AG04449 (cell line): ENCODE measurements at regions of chr1 and their contacts with region 1.

Region 1: GRCh38 chr1:200890818-200891773 is 3.6 kb upstream of the INAVA start:
- DNase-seq: no peak
- H3K4me3 ChIP-seq: peak overlapping the region; percentile 55
- CTCF ChIP-seq: peak; percentile 66

Region 2: GRCh38 chr1:200526709-200527612 is 364.1 kb before region 1 on chr1:
- CTCF ChIA-PET with region 1: no interaction called
- POLR2A ChIA-PET with region 1: no interaction called
- DNase-seq: no peak
- H3K4me3 ChIP-seq: no peak overlapping the region
- CTCF ChIP-seq: no peak

Region 3: DNA sequence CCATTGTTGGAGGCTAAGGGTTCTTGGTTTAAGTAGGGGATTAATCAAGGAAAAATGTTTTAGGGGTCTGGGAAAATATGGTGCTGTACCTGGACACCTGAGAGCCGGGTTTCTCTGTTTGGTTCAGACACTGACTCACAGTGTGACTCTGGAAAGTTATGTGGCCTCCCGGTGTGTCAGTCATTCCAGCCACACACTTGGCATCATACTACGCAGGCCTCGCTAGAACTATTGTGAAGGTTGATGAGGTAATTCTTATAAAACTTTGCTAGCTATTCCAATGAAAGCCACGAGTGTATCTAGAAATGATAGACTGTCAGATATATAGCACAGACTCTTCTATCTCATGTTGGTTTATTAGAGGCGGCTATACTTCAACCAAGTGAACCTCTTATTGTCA is 157.2 kb before region 1 on chr1:
- CTCF ChIA-PET with region 1: no interaction called
- POLR2A ChIA-PET with region 1: no interaction called
- DNase-seq: no peak
- H3K4me3 ChIP-seq: no peak overlapping the region
- CTCF ChIP-seq: no peak

Region 4: DNA sequence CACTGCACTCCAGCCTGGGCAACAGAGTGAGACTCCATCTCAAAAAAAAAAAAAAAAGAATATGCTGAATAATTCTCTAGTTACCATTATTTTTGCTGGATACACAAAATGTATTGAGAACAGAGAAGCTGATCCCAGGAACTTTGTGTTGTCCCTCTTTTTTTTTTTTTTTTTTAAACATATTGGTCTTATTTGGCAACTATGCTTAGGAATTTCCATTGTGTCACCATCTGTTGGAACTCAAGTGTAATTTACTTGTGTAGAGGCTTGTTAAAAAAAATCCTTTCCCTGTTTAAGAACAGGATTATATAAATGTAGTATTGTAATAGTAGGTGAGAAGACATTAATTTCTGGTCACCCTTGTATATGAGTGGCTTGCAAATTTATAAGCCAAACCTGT is 123.8 kb before region 1 on chr1:
- CTCF ChIA-PET with region 1: no interaction called
- POLR2A ChIA-PET with region 1: no interaction called
- DNase-seq: no peak
- H3K4me3 ChIP-seq: no peak overlapping the region
- CTCF ChIP-seq: no peak

Region 5: GRCh38 chr1:200795156-200795555 is 95.9 kb before region 1 on chr1:
- CTCF ChIA-PET with region 1: no interaction called
- POLR2A ChIA-PET with region 1: no interaction called
- DNase-seq: peak; percentile 31
- H3K4me3 ChIP-seq: no peak overlapping the region
- CTCF ChIP-seq: no peak

Region 6: GRCh38 chr1:200877839-200878551 is 13.1 kb before region 1 on chr1:
- CTCF ChIA-PET with region 1: interaction called, 10 read pairs
- POLR2A ChIA-PET with region 1: no interaction called
- DNase-seq: no peak
- H3K4me3 ChIP-seq: no peak overlapping the region
- CTCF ChIP-seq: no peak